CD14-positive monocyte (primary cell): ENCODE measurements at regions of chr19 and their contacts with region 1.

Region 1: GRCh38 chr19:7652061-7652641 is 15.2 kb downstream of the STXBP2 start:
- DNase-seq: peak; percentile 95 to 99 (median 98)
- H3K4me3 ChIP-seq: no peak overlapping the region
- H3K4me3 Mint-ChIP-seq: peak overlapping the region; percentile 47 to 48
- H3K27ac ChIP-seq: peak overlapping the region; percentile 85 to 91
- H3K27ac Mint-ChIP-seq: peak overlapping the region; percentile 94 to 99 (median 98)
- H3K4me1 ChIP-seq: peaks cover 54 to 55% of the 10 kb centered on the region in 2 donors
- H3K4me1 Mint-ChIP-seq: peaks cover 45% of the 10 kb centered on the region
- H3K27me3 ChIP-seq: no peaks in the 10 kb centered on the region
- H3K27me3 Mint-ChIP-seq: peaks cover 0 to 11% (median 2%) of the 10 kb centered on the region in 3 donors
- CTCF ChIP-seq: peak; percentile 95

Region 2: GRCh38 chr19:7540761-7541491 is 111.2 kb before region 1 on chr19:
- intact Hi-C with region 1: loop called in 1 of 2 experiments (anchors 10 kb)
- DNase-seq: no peak
- H3K4me3 ChIP-seq: no peak overlapping the region
- H3K4me3 Mint-ChIP-seq: no peak overlapping the region
- H3K27ac ChIP-seq: no peak overlapping the region
- H3K27ac Mint-ChIP-seq: no peak overlapping the region
- H3K4me1 ChIP-seq: peaks cover 51 to 53% of the 10 kb centered on the region in 2 donors
- H3K4me1 Mint-ChIP-seq: peaks cover 57% of the 10 kb centered on the region
- H3K27me3 ChIP-seq: no peaks in the 10 kb centered on the region
- H3K27me3 Mint-ChIP-seq: no peaks in the 10 kb centered on the region
- CTCF ChIP-seq: no peak

Region 3: DNA sequence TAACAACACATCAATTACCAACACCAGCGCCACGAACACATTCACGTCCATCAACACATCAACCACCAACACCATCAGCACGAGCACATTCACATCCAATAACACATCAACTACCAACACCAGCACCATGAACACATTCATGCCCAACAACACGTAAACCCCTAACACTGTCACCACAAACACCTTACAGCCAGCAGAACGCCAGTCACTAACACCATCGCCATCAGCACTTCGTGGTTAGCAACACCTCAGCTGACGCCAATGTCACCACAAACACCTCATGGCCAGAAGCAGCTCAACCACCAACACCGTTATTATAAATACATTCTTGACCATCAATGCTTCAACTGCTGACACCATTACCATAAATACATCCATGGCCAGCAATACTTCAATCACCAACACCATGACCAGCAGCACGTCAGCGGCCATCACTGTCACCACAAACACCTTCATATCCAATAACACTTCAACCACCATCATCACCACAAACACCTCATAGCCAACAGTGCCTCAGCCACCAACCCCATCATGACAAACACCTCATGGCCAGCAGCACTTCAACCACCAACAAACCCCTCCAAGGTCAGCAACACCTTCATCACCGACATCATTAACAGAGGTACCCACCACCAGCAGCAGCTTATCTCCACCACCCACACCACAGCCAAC is 40.4 kb after region 1 on chr19:
- intact Hi-C with region 1: no loop called
- DNase-seq: no peak
- H3K4me3 ChIP-seq: no peak overlapping the region
- H3K4me3 Mint-ChIP-seq: no peak overlapping the region
- H3K27ac ChIP-seq: no peak overlapping the region
- H3K27ac Mint-ChIP-seq: no peak overlapping the region
- H3K4me1 ChIP-seq: peaks cover 19 to 24% of the 10 kb centered on the region in 2 donors
- H3K4me1 Mint-ChIP-seq: peaks cover 25% of the 10 kb centered on the region
- H3K27me3 ChIP-seq: no peaks in the 10 kb centered on the region
- H3K27me3 Mint-ChIP-seq: peaks cover 0 to 6% (median 6%) of the 10 kb centered on the region in 3 donors
- CTCF ChIP-seq: no peak

Region 4: GRCh38 chr19:7705387-7706187 is 53.4 kb after region 1 on chr19:
- intact Hi-C with region 1: loop called in 1 of 2 experiments (anchors 2 kb)
- DNase-seq: peak; percentile 91 to 95 (median 94)
- H3K4me3 ChIP-seq: peak overlapping the region in 1 of 3 experiments; percentile 67
- H3K4me3 Mint-ChIP-seq: peak overlapping the region; percentile 70 to 85
- H3K27ac ChIP-seq: peak overlapping the region; percentile 92 to 98
- H3K27ac Mint-ChIP-seq: peak overlapping the region; percentile 98 to 100 (median 99)
- H3K4me1 ChIP-seq: peaks cover 84 to 88% of the 10 kb centered on the region in 2 donors
- H3K4me1 Mint-ChIP-seq: peaks cover 79% of the 10 kb centered on the region
- H3K27me3 ChIP-seq: no peaks in the 10 kb centered on the region
- H3K27me3 Mint-ChIP-seq: peaks cover 0 to 6% (median 4%) of the 10 kb centered on the region in 3 donors
- CTCF ChIP-seq: no peak